ENCODE measurements at regions of chr7 and their contacts with region 1.

Region 1: DNA sequence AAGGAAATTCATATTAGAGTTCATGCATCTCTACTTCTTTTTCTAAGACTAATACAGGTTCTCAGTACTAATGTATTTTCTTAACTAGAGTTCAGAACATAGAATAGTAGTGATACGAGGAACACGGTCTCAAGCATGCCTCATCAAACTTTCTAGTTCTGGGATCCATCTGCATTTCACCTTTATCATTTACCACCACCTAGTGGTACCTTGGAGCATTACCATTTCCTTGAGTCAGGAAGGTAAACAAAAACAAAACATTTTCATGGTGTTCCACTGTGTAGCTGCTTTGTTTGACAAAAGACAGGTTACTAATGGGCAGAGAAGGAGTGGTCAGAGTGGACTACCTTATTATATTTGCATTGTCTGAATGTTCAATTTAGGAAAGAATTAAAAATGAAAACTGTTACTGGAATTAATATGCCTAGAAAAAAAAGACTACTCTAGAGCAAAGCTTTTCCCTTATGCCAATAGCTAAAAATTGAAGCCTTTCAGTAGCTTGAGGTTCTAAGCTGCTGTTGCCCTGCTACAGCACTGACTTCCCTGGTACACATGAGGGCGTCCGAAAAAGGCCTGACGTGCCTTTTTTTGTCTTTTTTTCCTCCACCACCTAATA is 44.5 kb downstream of the STARD3NL start:
- DNase-seq: no peak
- H3K4me3 Mint-ChIP-seq: no peak overlapping the region
- H3K27ac Mint-ChIP-seq: no peak overlapping the region
- H3K4me1 Mint-ChIP-seq: peaks cover 20% of the 10 kb centered on the region
- H3K27me3 Mint-ChIP-seq: no peaks in the 10 kb centered on the region

Region 2: DNA sequence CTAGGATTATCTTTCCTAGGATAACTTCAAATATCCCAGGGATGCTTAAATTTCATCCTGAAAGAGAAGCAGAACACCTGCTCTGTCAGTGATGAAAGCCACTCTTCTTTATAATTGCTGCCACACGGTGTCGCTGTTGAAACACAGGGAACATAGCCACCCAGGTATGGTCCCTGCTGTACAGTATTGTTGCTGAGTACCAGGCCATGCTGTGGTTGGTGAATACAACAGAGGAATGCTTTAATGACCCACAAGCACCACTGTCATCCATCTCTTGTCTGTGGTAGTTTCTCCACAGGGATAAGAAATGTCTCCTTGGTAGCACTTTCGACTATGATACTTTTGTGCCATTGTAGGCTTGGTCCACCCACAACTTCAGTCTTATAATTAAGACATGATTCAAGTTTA is 115.1 kb before region 1 on chr7:
- CTCF ChIA-PET with region 1: interaction called, 29 read pairs
- DNase-seq: peak; percentile 76
- H3K4me3 Mint-ChIP-seq: no peak overlapping the region
- H3K27ac Mint-ChIP-seq: no peak overlapping the region
- H3K4me1 Mint-ChIP-seq: no peaks in the 10 kb centered on the region
- H3K27me3 Mint-ChIP-seq: peaks cover 12% of the 10 kb centered on the region

Region 3: DNA sequence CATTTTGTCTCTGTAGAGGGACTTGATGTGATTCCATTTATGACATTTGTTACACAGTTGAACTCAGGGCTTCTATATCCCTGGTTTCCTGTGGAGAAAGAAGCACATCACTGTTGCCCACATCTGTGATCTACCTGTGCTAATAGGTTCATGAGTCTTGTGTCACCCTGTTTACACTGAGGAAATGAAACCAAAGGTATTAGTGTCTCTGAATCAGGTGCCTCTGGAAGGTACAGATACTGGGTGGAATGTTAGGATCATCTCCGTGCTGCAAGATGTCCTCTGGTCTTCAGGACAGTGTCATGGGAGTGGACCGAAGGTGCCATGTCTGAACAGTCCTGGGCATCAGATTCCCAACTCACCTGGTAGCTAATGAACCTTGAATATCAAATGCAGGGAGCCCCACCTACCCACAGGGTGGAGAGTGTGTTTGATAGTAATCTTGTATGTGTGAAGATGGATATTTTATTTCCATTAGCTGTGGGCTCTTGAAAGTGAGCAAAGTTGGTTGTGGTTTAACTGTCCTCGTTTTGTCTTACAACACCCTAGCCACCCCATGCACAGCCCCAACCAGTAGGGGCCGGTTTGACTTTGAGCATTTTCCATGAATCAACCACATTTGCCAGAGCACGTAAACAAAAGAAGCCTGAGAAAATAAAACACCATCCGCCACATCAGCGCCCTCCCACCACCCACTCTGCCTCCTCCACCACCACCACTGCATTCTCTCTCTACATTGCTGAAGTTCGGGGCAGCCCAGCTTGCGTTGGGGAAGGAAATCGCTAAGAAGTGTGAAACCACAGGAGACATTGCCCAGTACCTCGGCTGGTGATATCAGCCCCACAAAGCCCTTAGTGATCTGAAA is 10.1 kb after region 1 on chr7:
- CTCF ChIA-PET with region 1: interaction called, 16 read pairs
- DNase-seq: peak; percentile 79
- H3K4me3 Mint-ChIP-seq: peak overlapping the region; percentile 48
- H3K27ac Mint-ChIP-seq: peak overlapping the region; percentile 96
- H3K4me1 Mint-ChIP-seq: peaks cover 76% of the 10 kb centered on the region
- H3K27me3 Mint-ChIP-seq: no peaks in the 10 kb centered on the region

Region 4: DNA sequence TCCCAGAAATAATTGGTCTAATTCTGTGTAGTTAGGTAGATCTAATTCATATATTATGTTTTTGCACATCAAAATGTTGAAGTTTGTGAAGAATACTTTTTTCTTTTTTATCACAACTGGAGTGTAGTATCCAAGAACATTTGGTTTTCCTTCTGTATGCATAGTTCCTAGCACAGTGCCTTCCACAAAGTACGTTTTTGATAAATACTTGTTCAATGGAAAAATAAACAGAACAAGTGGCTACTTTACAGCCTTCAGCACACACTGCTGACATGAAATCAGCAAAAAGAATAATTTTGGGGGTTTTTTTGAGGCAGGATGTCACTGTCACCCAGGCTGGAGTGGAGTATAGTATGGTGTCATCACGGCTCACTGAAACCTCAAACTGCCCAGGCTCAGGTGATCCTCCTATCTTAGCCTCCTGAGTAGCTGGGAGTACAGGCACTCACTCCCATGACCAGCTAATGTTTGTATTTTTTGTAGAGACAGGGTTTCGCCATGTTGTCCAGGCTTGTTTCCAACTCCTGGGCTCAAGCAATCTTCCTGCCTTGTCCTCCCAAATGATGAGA is 22.9 kb after region 1 on chr7:
- CTCF ChIA-PET with region 1: no interaction called
- DNase-seq: no peak
- H3K4me3 Mint-ChIP-seq: no peak overlapping the region
- H3K27ac Mint-ChIP-seq: peak overlapping the region; percentile 53
- H3K4me1 Mint-ChIP-seq: peaks cover 5% of the 10 kb centered on the region
- H3K27me3 Mint-ChIP-seq: peaks cover 13% of the 10 kb centered on the region

Region 5: GRCh38 chr7:38318803-38319416 is 96.3 kb after region 1 on chr7:
- CTCF ChIA-PET with region 1: interaction called, 59 read pairs
- DNase-seq: no peak
- H3K4me3 Mint-ChIP-seq: no peak overlapping the region
- H3K27ac Mint-ChIP-seq: peak overlapping the region; percentile 73
- H3K4me1 Mint-ChIP-seq: peaks cover 39% of the 10 kb centered on the region
- H3K27me3 Mint-ChIP-seq: no peaks in the 10 kb centered on the region